ENCODE measurements at regions of chrX and their contacts with region 1.

Region 1: GRCh38 chrX:119729408-119730201 is 28.8 kb upstream of the SOWAHD start:
- DNase-seq: peak; percentile 46 to 70
- ATAC-seq: peak; percentile 60 to 75; a peak in 4 of 6 replicates
- H3K4me3 ChIP-seq: no peak overlapping the region
- H3K27ac ChIP-seq: no peak overlapping the region
- H3K4me1 ChIP-seq: no peaks in the 10 kb centered on the region
- CTCF ChIP-seq: peak; percentile 66
- EP300 ChIP-seq: no peak
- POLR2A ChIP-seq: no peak
- RAD21 ChIP-seq: peak; percentile 64 to 66

Region 2: GRCh38 chrX:119427024-119427794 is 302.4 kb before region 1 on chrX:
- CTCF ChIA-PET with region 1: no interaction called
- POLR2A ChIA-PET with region 1: no interaction called
- DNase-seq: peak in 1 of 2 experiments; percentile 19
- ATAC-seq: peak in 1 of 2 experiments; percentile 31; a peak in 3 of 6 replicates
- H3K4me3 ChIP-seq: no peak overlapping the region
- H3K27ac ChIP-seq: peak overlapping the region; percentile 22 to 52; a peak in 4 of 6 replicates
- H3K4me1 ChIP-seq: peaks cover 25% of the 10 kb centered on the region
- CTCF ChIP-seq: no peak
- EP300 ChIP-seq: no peak
- POLR2A ChIP-seq: no peak
- RAD21 ChIP-seq: no peak

Region 3: DNA sequence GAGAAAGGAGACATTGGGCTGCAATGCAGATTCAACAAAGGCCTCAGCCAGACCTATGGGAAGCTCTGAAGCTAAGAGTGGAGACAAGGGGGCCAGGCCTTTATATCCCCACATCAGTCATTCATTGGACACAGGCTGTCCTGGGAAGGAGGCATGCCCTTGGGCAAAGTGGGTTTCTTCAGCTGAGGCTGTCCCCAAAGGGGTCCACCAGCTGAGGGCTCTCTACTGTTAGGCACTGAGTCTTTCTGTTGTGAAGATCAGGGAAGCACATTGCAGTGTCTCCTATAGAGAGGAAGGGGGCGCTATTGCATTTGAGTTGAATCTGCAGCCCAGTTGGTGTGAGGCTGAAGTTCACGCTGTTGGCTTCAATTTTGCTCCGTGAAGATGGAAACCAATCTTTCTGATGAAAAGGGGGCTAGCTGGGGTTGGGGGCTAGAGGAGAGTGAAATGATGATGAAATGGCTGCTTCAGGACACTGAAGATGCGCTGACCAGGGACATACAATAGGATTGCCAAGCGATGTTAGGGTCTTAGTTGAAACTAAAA is 213.4 kb before region 1 on chrX:
- CTCF ChIA-PET with region 1: interaction called, 30 read pairs
- POLR2A ChIA-PET with region 1: no interaction called
- DNase-seq: peak; percentile 71 to 80
- ATAC-seq: peak; percentile 81 to 83
- H3K4me3 ChIP-seq: no peak overlapping the region
- H3K27ac ChIP-seq: no peak overlapping the region; a peak in 1 of 6 replicates
- H3K4me1 ChIP-seq: peaks cover 13% of the 10 kb centered on the region
- CTCF ChIP-seq: peak; percentile 81
- EP300 ChIP-seq: no peak
- POLR2A ChIP-seq: no peak
- RAD21 ChIP-seq: peak; percentile 82 to 94

Region 4: DNA sequence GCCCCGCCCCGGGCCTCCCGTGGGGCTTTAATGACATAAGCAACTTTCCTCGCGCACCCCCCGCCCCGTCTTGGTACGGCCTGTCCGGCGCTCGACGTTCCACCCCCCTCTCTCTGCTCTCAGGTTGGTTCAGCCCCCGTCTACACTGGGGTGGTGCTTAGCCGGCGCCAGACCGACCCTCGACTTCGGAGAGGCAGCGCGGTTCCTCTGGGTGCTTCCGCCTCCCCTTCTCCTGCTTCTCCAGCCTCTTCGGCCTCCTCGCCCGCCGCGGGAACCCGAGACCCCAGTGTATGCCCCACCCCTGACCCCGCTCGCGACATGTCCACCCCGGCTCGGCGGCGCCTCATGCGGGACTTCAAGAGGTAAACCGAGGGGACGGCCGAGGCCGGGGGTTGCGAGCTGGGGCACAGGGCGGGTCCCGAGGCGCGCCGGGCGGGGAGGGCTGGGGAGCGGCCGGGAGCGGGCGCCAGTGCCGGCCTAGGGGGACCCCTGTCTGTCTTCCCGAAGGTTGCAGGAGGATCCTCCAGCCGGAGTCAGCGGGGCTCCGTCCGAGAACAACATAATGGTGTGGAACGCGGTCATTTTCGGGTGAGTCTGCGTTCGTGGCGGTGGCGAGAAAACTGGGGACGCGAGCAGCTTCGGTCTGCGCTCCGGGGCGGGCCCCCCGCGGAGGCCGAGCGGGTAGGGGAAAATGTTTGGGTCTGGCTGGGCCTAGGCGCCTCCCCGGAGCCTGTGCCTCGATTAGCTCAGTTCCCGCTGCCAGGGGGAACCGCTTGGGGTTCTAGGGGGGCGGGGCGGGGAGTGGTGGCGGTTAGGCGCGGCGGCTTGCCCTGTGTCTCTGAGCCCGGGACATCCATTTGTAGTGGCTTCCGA is 155.0 kb before region 1 on chrX and contains the start of gene UBE2A:
- CTCF ChIA-PET with region 1: no interaction called
- POLR2A ChIA-PET with region 1: no interaction called
- DNase-seq: peak; percentile 85 to 95
- ATAC-seq: peak; percentile 93 to 94
- H3K4me3 ChIP-seq: peak within 1 kb of the TSS; percentile 88
- H3K27ac ChIP-seq: peak within 1 kb of the TSS; percentile 89 to 99
- H3K4me1 ChIP-seq: peaks cover 10% of the 10 kb centered on the region; the same call in 2 of the 3 replicates
- CTCF ChIP-seq: peak; percentile 22; the same call in 2 of the 3 replicates
- EP300 ChIP-seq: no peak
- POLR2A ChIP-seq: peak; percentile 95
- RAD21 ChIP-seq: peak; percentile 16 to 20; a peak in 2 of 5 replicates
- polyA plus RNA-seq, gene UBE2A: 109 and 113 TPM in 2 replicates

Region 5: GRCh38 chrX:119606280-119607015 is 123.2 kb before region 1 on chrX and contains the start of gene NKRF:
- CTCF ChIA-PET with region 1: interaction called, 18 read pairs
- POLR2A ChIA-PET with region 1: no interaction called
- DNase-seq: peak; percentile 83 to 94
- ATAC-seq: peak; percentile 87 to 92
- H3K4me3 ChIP-seq: peak within 1 kb of the TSS; percentile 95
- H3K27ac ChIP-seq: peak within 1 kb of the TSS; percentile 95 to 99
- H3K4me1 ChIP-seq: peaks cover 7% of the 10 kb centered on the region; the same call in 2 of the 3 replicates
- CTCF ChIP-seq: no peak
- EP300 ChIP-seq: no peak
- POLR2A ChIP-seq: peak; percentile 82
- RAD21 ChIP-seq: no peak
- polyA plus RNA-seq, gene NKRF: 14.2 and 16.2 TPM in 2 replicates

Region 6: DNA sequence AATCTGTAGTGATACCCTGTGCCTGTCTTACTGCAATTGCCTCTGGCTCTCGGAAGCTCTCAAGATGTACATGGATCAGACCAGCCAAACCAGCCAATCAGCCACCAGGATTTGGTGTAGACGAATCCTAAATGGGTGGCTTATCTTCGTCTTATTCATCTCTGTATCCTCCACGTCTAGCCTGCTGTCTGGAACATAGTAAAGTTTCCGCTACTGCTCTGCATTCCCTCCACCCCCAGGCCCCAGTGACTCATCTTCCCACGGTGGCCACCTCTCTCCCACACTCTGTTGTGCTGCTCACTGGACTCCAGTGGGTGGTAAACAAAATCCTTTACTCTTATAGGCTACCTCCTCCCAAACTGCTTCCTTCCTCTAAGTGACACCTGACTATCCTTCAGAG is 74.5 kb before region 1 on chrX:
- CTCF ChIA-PET with region 1: no interaction called
- POLR2A ChIA-PET with region 1: no interaction called
- DNase-seq: peak in 1 of 2 experiments; percentile 11
- ATAC-seq: peak in 1 of 2 experiments; percentile 38; a peak in 3 of 6 replicates
- H3K4me3 ChIP-seq: no peak overlapping the region
- H3K27ac ChIP-seq: no peak overlapping the region
- H3K4me1 ChIP-seq: no peaks in the 10 kb centered on the region
- CTCF ChIP-seq: no peak
- EP300 ChIP-seq: no peak
- POLR2A ChIP-seq: no peak
- RAD21 ChIP-seq: no peak

Region 7: GRCh38 chrX:119693040-119693995 is 36.3 kb before region 1 on chrX and contains the start of gene SEPTIN6:
- CTCF ChIA-PET with region 1: interaction called, 12 read pairs
- POLR2A ChIA-PET with region 1: interaction called, 4 read pairs
- DNase-seq: peak; percentile 49 to 75
- ATAC-seq: peak; percentile 84 to 85
- H3K4me3 ChIP-seq: peak within 1 kb of the TSS; percentile 81
- H3K27ac ChIP-seq: peak within 1 kb of the TSS; percentile 82 to 88
- H3K4me1 ChIP-seq: peaks cover 11% of the 10 kb centered on the region; the same call in 2 of the 3 replicates
- CTCF ChIP-seq: no peak
- EP300 ChIP-seq: no peak
- POLR2A ChIP-seq: peak; percentile 35
- RAD21 ChIP-seq: no peak
- polyA plus RNA-seq, gene SEPTIN6: 15.2 and 16.3 TPM in 2 replicates

Region 8: GRCh38 chrX:119698845-119699244 is 30.8 kb before region 1 on chrX:
- CTCF ChIA-PET with region 1: interaction called, 12 read pairs
- POLR2A ChIA-PET with region 1: interaction called, 3 read pairs
- DNase-seq: peak; percentile 70 to 75
- ATAC-seq: peak; percentile 84 to 85
- H3K4me3 ChIP-seq: no peak overlapping the region
- H3K27ac ChIP-seq: no peak overlapping the region
- H3K4me1 ChIP-seq: no peaks in the 10 kb centered on the region
- CTCF ChIP-seq: peak; percentile 51
- EP300 ChIP-seq: no peak
- POLR2A ChIP-seq: no peak
- RAD21 ChIP-seq: peak in 1 of 2 experiments; percentile 51; a peak in 2 of 5 replicates

Region 9: DNA sequence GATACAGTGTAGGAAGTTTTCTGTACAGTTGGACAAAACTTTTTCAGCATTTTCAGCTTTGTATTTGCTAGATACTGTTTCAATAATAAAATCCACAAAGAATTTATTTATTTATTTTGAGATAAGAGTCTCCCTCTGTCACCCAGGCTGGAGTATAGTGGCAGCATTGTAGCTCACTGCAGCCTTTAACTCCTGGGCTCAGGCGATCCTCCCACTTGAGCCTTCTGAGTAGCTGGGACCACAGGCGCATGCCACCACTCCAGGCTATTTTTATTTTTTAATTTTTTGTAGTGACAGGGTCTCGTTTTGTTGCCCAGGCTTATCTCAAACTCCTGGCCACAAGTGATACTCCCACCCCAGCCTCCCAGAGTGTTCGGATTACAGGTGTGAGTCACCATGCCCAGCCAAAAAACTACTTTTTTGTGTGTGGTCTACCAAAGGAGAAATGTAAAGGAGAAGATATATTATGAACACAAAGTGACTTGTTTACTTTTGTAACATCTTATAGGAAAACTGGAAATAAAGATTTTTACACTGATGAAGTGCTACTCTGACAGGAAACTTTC is 15.8 kb after region 1 on chrX:
- CTCF ChIA-PET with region 1: interaction called, 12 read pairs
- POLR2A ChIA-PET with region 1: no interaction called
- DNase-seq: no peak
- ATAC-seq: no peak
- H3K4me3 ChIP-seq: no peak overlapping the region
- H3K27ac ChIP-seq: no peak overlapping the region
- H3K4me1 ChIP-seq: no peaks in the 10 kb centered on the region
- CTCF ChIP-seq: no peak
- EP300 ChIP-seq: no peak
- POLR2A ChIP-seq: no peak
- RAD21 ChIP-seq: no peak

Region 10: DNA sequence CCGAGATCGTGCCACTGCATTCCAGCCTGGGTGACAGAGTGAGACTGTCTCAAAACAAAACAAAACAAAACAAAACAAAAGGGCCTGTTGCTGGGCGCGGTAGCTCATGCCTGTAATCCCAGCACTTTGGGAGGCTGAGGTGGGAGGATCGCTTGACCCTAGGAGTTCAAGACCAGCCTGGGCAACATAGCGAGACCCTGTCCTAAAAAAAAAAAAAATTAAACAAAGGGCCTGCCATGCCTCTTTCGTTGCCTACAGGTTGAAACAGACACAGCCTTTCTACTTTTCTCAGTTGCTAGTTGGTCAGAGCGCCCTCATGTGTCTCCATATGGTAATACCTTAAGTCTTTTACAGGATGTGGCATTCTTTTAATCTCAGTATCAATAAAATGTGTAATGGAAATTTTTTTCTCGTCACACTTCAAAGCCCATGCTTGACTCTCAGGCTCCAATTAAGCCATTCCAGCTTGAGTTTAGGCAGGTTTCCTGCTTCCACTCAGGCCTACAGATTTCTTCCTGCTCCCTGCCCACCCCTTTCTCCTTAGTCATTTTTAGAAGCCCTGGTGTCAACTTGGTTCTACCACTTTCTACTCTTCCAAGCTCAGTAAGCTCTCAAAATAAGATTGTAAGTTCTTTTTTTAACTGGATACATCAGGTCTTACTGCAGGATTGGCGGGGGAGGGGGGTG is 24.1 kb after region 1 on chrX:
- CTCF ChIA-PET with region 1: interaction called, 13 read pairs
- POLR2A ChIA-PET with region 1: no interaction called
- DNase-seq: peak in 1 of 2 experiments; percentile 59
- ATAC-seq: peak in 1 of 2 experiments; percentile 19; a peak in 1 of 6 replicates
- H3K4me3 ChIP-seq: no peak overlapping the region
- H3K27ac ChIP-seq: no peak overlapping the region
- H3K4me1 ChIP-seq: no peaks in the 10 kb centered on the region
- CTCF ChIP-seq: peak; percentile 51
- EP300 ChIP-seq: no peak
- POLR2A ChIP-seq: no peak
- RAD21 ChIP-seq: peak in 1 of 2 experiments; percentile 42; a peak in 2 of 5 replicates

Region 11: DNA sequence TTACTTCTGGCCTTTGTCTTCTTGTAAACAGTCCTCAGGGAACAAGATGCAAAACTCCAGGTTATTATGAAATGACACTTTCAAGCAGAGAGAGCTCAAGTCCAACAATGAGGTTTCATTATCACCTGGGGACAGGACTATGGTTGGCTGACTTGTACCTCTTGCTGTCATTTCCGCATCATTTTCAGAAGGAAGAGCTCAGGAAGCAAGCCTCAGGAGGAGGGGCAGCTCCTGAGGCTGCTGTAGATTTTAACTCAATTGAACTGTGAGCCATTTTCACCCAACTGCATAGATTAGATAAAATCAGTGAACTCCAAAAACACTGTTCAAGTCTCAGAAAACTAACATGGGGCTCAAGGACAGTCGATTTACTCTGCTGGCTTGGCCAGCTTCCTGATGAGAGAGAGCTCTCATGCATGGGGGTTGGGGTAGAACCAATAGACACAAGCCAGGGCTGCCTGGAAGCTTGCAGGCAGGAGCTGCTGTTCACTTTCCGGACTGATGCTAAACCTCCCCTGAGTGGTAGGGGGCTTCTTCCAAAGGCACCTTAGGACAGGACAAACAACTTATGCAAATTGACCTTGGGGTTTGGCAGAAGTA is 558.0 kb after region 1 on chrX:
- CTCF ChIA-PET with region 1: no interaction called
- POLR2A ChIA-PET with region 1: no interaction called
- DNase-seq: no peak
- ATAC-seq: no peak
- H3K4me3 ChIP-seq: no peak overlapping the region
- H3K27ac ChIP-seq: no peak overlapping the region
- H3K4me1 ChIP-seq: no peaks in the 10 kb centered on the region
- CTCF ChIP-seq: no peak
- EP300 ChIP-seq: no peak
- POLR2A ChIP-seq: no peak
- RAD21 ChIP-seq: no peak